ENCODE measurements at regions of chr16 and their contacts with region 1.

Region 1: DNA sequence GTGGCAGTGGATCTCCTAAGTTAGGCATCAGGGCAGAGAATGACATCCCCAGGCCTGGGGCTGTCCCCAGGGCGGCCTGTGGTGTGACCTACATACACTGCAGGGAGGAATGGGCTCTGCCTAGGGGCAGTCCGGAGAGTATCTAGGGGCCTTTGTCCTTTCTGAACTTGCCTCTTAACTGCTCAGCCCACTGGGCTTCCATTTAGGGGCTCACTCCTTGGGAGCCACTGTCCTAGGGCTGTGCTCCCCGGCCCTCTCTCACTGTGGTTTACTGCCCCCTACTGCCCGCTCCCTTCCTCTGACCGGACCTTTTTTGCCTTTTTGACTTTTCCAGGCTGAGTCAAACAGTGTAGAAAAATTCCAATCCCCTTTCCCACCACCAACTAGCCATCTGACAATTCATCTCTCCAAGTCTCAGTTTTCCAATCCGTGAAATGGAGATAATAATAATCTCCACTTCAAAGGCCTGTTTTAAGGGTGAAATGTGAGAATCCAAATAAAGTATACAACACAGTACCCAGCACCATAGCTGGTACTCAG is 66.8 kb downstream of the DNAH3 start:
- DNase-seq: peak in 8 of 10 donors; percentile 26 to 63 (median 36)
- H3K4me3 ChIP-seq: no peak overlapping the region
- H3K27ac ChIP-seq: no peak overlapping the region
- H3K27me3 ChIP-seq: no peaks in the 10 kb centered on the region
- CTCF ChIP-seq: peak; percentile 41 to 81 (median 71)

Region 2: GRCh38 chr16:20849587-20850390 is 234.0 kb before region 1 on chr16:
- intact Hi-C with region 1: loop called (anchors 2 to 5 kb)
- DNase-seq: peak; percentile 59 to 80 (median 69)
- H3K4me3 ChIP-seq: no peak overlapping the region
- H3K27ac ChIP-seq: no peak overlapping the region
- H3K27me3 ChIP-seq: no peaks in the 10 kb centered on the region
- CTCF ChIP-seq: peak; percentile 91 to 100 (median 98)